ENCODE measurements at regions of chr5 and their contacts with region 1.

Region 1: GRCh38 chr5:132829742-132830435 is 558 bp downstream of the SHROOM1 start:
- DNase-seq: no peak
- H3K4me3 ChIP-seq: peak overlapping the region; percentile 64
- CTCF ChIP-seq: peak; percentile 96

Region 2: GRCh38 chr5:132866342-132867045 is 36.6 kb after region 1 on chr5 and contains the starts of genes GDF9 and UQCRQ:
- CTCF ChIA-PET with region 1: interaction called, 60 read pairs
- POLR2A ChIA-PET with region 1: no interaction called
- DNase-seq: peak; percentile 98
- H3K4me3 ChIP-seq: peak within 1 kb of the TSS; percentile 92
- CTCF ChIP-seq: peak; percentile 53

Region 3: DNA sequence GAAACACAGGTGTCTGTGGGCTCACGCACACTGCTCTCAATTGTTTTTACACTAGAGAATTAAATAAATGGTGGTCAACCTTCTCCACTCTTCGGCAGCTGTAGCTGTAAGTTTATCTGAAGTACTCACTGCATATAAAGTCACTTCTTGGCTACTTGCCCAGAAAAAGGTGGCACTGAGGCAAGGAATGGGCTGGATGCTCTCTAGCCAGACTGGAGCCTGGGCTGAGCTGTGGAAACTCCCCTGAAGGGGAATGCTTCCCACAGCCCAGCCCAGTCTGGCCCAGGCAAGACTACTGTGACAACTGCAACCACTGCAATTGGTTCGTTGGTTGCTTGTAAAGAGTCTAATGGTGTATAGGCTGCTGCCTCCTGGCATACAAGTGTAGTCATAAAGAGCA is 48.0 kb after region 1 on chr5:
- CTCF ChIA-PET with region 1: interaction called, 63 read pairs
- POLR2A ChIA-PET with region 1: no interaction called
- DNase-seq: no peak
- H3K4me3 ChIP-seq: no peak overlapping the region
- CTCF ChIP-seq: no peak

Region 4: GRCh38 chr5:132883261-132883834 is 53.5 kb after region 1 on chr5:
- CTCF ChIA-PET with region 1: interaction called, 63 read pairs
- POLR2A ChIA-PET with region 1: no interaction called
- DNase-seq: no peak
- H3K4me3 ChIP-seq: no peak overlapping the region
- CTCF ChIP-seq: peak; percentile 71

Measured in AG04449 (cell line).